ENCODE measurements at regions of chr11 and their contacts with region 1.

Region 1: DNA sequence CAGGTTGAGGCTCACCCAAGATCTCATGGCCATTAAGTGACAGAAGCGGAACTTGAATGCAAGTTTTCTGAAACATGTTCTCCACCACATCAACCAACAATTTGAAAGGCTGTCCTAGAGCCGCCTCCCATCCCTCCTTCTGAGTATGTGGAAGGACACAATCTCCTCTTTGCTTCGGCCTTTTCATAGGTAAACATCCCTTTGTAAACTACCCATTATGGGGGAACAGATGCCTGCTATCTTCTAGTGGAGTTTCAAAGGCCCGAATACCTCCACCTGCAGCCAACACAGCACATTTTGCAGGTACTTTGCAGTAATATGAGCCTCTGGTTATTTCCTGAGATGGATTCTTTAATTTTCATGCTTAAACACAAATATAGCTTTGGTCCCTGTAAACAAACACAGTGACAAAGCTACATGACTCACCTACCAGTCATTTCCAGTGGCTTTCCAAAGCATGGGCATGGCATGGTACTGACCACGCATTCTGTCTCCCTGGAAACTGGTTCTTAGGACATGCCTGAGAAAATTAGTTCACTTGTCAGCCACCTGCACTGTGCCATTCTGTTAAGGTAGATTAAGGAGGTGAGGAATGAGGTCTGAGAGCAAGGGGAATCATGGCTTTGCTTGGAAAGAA is 60.1 kb downstream of the EHF start:
- DNase-seq: peak; percentile 72
- H3K4me3 Mint-ChIP-seq: no peak overlapping the region
- H3K27ac Mint-ChIP-seq: peak overlapping the region; percentile 93
- H3K4me1 Mint-ChIP-seq: peaks cover 42% of the 10 kb centered on the region
- H3K27me3 Mint-ChIP-seq: no peaks in the 10 kb centered on the region
- CTCF ChIP-seq: no peak

Region 2: GRCh38 chr11:34749666-34750659 is 68.9 kb after region 1 on chr11:
- CTCF ChIA-PET with region 1: no interaction called
- POLR2A ChIA-PET with region 1: interaction called, 24 read pairs
- intact Hi-C with region 1: loop called (anchors 10 kb)
- DNase-seq: peak; percentile 96
- H3K4me3 Mint-ChIP-seq: peak overlapping the region; percentile 66
- H3K27ac Mint-ChIP-seq: peak overlapping the region; percentile 90
- H3K4me1 Mint-ChIP-seq: peaks cover 46% of the 10 kb centered on the region
- H3K27me3 Mint-ChIP-seq: no peaks in the 10 kb centered on the region
- CTCF ChIP-seq: no peak